ENCODE measurements at regions of chr1 and their contacts with region 1.

Region 1: GRCh38 chr1:180482425-180483275 is 19.7 kb downstream of the ACBD6 start:
- DNase-seq: peak in 3 of 9 experiments; percentile 13 to 68 (median 56)
- ATAC-seq: peak; percentile 61
- H3K4me3 ChIP-seq: no peak overlapping the region
- H3K4me3 Mint-ChIP-seq: peak overlapping the region; percentile 16
- H3K27ac ChIP-seq: no peak overlapping the region
- H3K27ac Mint-ChIP-seq: no peak overlapping the region
- H3K4me1 ChIP-seq: peaks cover 3% of the 10 kb centered on the region
- H3K4me1 Mint-ChIP-seq: peaks cover 15% of the 10 kb centered on the region
- H3K27me3 ChIP-seq: no peaks in the 10 kb centered on the region
- H3K27me3 Mint-ChIP-seq: no peaks in the 10 kb centered on the region
- CTCF ChIP-seq: peak; percentile 88

Region 2: DNA sequence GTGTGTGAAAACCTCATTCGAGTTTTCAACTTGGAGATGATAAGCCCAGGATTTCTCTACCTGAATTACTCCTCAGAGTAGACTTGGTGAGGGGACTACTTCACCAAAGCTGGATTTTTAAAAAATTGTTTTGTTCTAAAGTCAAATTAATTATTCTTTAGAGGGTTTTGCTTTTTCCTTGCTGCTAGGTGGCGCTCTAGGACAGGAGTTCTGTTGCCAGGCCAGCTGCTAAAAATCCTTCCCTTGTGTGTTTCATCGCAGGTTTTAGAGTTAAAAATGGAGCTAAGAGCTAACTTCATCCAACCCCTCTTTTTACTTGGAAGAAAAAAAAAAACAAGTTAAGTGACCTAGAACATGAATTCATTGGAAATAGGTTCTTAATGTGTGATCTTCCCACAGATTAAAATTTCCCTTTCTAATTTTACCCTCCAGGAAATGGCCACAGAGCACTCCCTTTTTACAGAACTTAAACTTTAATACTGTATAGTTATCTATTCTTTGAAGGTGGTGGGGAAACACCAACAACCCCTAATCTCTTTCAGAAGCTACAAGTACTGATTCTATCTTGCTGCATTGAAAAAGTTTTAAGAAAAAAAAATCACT is 776.2 kb before region 1 on chr1:
- CTCF ChIA-PET with region 1: interaction called, 3 read pairs
- POLR2A ChIA-PET with region 1: no interaction called
- intact Hi-C with region 1: loop called (anchors 2 to 5 kb)
- DNase-seq: peak; percentile 23 to 76 (median 58)
- ATAC-seq: peak; percentile 32
- H3K4me3 ChIP-seq: no peak overlapping the region
- H3K4me3 Mint-ChIP-seq: no peak overlapping the region
- H3K27ac ChIP-seq: no peak overlapping the region
- H3K27ac Mint-ChIP-seq: no peak overlapping the region
- H3K4me1 ChIP-seq: peaks cover 6% of the 10 kb centered on the region
- H3K4me1 Mint-ChIP-seq: peaks cover 7% of the 10 kb centered on the region
- H3K27me3 ChIP-seq: no peaks in the 10 kb centered on the region
- H3K27me3 Mint-ChIP-seq: peaks cover 4% of the 10 kb centered on the region
- CTCF ChIP-seq: peak; percentile 65

Region 3: DNA sequence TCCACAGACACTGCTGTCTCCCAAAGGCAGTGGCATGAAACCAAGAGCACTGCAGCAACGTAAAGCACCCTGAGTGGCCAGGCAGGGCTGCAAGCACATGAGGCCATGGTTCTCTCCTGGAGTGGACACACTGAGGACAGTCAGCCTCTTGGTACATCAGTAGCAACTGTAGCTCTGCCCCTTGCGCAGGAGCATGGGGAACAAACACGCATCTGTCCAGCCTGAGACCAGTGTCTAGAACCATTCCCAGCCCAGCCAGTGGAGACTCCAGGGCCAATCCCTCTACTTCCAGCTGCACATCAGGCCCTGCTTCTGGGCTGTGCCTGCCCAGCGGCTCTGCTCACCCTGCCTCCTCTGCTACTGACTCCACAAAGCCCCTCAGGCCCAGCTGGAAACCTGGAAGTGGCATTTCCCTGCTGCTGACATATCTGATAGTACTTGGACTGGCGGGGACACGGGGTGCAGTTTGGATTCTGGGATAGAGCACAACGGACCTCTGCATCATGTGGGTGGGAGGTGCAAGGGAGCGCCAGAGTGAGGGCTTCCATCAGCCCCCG is 654.0 kb before region 1 on chr1:
- CTCF ChIA-PET with region 1: no interaction called
- POLR2A ChIA-PET with region 1: no interaction called
- intact Hi-C with region 1: no loop called
- DNase-seq: peak in 1 of 9 experiments; percentile 27
- ATAC-seq: no peak
- H3K4me3 ChIP-seq: no peak overlapping the region
- H3K4me3 Mint-ChIP-seq: no peak overlapping the region
- H3K27ac ChIP-seq: no peak overlapping the region
- H3K27ac Mint-ChIP-seq: no peak overlapping the region
- H3K4me1 ChIP-seq: peaks cover 23% of the 10 kb centered on the region
- H3K4me1 Mint-ChIP-seq: peaks cover 24% of the 10 kb centered on the region
- H3K27me3 ChIP-seq: no peaks in the 10 kb centered on the region
- H3K27me3 Mint-ChIP-seq: peaks cover 4% of the 10 kb centered on the region
- CTCF ChIP-seq: no peak

Region 4: DNA sequence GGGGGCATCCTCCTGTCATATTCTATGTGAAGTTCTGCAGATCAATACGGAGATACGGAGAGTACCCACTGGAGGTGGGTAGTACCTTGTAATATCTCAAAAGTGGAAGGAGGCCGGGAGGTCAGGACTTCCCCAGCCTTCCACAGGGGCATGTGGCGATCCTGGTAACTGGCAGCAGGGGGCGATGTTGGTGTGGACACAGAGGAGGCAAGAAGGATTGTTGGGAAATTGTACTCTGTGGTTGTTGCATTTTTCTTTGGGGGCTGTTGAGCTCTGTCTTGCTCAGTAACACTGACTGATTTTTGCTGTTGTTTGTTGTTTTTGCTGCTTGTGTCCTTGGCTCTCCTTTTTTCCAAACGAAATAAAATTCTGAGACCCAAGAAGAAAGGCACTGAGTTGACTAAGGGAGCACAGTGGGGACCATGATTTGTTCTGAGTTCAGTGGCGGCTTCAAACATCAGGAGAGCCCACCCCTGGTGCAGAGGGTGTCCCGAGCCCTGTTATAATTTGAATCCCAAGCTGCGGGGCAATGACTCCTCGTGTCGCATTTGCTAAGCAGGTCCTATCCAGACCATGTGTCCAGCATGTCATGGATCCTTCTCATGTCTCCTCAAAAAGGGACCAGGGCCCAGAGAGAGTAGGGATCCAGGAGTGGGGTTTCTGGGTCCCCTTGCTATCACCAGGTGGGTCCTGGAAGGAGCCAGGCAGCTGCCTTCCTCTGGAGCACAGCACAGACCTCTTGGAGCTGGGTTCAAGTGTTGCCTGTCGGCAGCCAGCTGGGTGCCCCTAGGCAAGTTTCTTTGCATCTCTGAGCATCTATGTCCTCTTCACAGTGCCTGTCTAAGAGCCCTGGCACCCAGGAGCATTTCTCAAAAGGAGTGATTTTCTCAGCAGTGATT is 229.8 kb before region 1 on chr1:
- CTCF ChIA-PET with region 1: interaction called, 16 read pairs
- POLR2A ChIA-PET with region 1: no interaction called
- intact Hi-C with region 1: loop called (anchors 1 kb)
- DNase-seq: peak; percentile 29 to 72 (median 59)
- ATAC-seq: peak; percentile 57
- H3K4me3 ChIP-seq: no peak overlapping the region
- H3K4me3 Mint-ChIP-seq: no peak overlapping the region
- H3K27ac ChIP-seq: no peak overlapping the region
- H3K27ac Mint-ChIP-seq: no peak overlapping the region
- H3K4me1 ChIP-seq: no peaks in the 10 kb centered on the region
- H3K4me1 Mint-ChIP-seq: no peaks in the 10 kb centered on the region
- H3K27me3 ChIP-seq: peaks cover 5 to 8% of the 10 kb centered on the region in 2 experiments
- H3K27me3 Mint-ChIP-seq: peaks cover 55% of the 10 kb centered on the region
- CTCF ChIP-seq: peak; percentile 55

Region 5: DNA sequence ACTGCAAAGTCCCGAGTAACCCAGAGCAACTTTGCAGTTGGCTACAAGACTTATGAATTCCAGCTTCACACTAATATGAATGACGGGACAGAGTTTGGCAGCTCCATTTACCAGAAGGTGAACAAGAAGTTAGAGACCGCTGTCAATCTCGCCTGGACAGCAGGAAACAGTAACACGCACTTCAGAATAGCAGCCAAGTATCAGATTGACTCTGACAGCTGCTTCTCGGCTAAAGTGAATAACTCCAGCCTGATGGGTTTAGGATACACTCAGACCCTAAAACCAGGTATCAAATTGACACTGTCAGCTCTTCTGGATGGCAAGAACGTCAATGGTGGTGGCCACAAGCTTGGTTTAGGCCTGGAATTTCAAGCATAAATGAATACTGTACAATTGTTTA is 47.1 kb before region 1 on chr1:
- CTCF ChIA-PET with region 1: no interaction called
- POLR2A ChIA-PET with region 1: no interaction called
- intact Hi-C with region 1: loop called in 1 of 2 experiments (anchors 1 kb)
- DNase-seq: no peak
- ATAC-seq: no peak
- H3K4me3 ChIP-seq: no peak overlapping the region
- H3K4me3 Mint-ChIP-seq: no peak overlapping the region
- H3K27ac ChIP-seq: no peak overlapping the region
- H3K27ac Mint-ChIP-seq: no peak overlapping the region
- H3K4me1 ChIP-seq: no peaks in the 10 kb centered on the region
- H3K4me1 Mint-ChIP-seq: peaks cover 16% of the 10 kb centered on the region
- H3K27me3 ChIP-seq: no peaks in the 10 kb centered on the region
- H3K27me3 Mint-ChIP-seq: no peaks in the 10 kb centered on the region
- CTCF ChIP-seq: no peak

Measured in CD8-positive, alpha-beta T cell (primary cell).